Activated CD4-positive, alpha-beta memory T cell treated with anti-CD3 and anti-CD28 coated beads for 36 hours (primary cell): ENCODE measurements at regions of chr21 and their contacts with region 1.

Region 1: DNA sequence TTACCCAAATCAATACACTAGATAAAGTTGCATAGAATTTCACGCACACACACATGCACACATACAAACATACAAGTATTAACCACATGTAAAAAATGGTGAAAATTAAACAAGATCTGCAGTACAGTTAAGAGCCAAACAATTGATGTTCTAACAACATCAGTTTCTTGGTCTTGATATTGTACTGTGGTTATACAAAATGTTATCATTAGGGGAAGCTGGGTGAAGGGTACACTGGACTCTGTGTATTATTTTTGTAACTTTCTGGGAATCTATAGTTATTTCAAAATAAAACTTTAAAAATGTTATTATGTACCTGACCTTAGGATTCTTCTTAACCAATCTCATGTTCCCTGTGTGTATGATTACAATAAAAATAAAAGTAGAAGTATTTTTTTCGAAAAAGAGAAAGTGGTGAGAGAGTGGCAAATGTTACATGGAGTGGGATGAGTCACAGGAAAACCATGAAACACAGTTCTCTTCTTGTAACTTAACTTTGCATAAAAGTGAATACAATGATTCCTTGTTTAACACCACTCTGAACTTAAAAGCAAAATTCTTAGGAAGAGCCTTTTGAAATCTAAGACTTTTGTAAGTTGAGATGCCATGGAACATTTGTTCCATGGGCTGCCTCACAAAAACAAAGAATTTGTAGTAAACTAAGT is 101.6 kb upstream of the RUNX1 start:
- DNase-seq: no peak
- H3K4me3 Mint-ChIP-seq: peak overlapping the region; percentile 6
- H3K27ac Mint-ChIP-seq: peak overlapping the region; percentile 90
- H3K4me1 Mint-ChIP-seq: peaks cover 51% of the 10 kb centered on the region
- H3K27me3 Mint-ChIP-seq: peaks cover 1% of the 10 kb centered on the region

Region 2: DNA sequence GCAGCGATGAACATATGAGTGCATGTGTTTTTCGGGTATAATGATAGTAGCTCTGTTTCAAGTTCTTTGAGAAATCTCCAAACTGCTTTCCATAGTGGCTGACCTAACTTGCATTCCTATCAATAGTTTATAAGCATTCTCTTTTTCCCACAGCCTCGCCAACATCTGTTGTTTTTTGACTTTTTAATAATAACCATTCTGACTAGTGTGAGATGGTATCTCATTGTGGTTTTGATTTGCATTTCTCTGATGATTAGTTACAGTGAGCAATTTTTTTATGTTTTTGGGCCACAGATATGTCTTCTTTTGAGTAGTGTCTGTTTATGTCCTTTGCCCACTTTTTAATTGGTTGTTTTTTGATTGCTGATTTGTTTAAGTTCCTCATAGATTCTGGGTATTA is 91.0 kb before region 1 on chr21:
- CTCF ChIA-PET with region 1: no interaction called
- POLR2A ChIA-PET with region 1: no interaction called
- intact Hi-C with region 1: no loop called
- DNase-seq: no peak
- H3K4me3 Mint-ChIP-seq: no peak overlapping the region
- H3K27ac Mint-ChIP-seq: peak overlapping the region; percentile 15
- H3K4me1 Mint-ChIP-seq: peaks cover 37% of the 10 kb centered on the region
- H3K27me3 Mint-ChIP-seq: no peaks in the 10 kb centered on the region

Region 3: GRCh38 chr21:35138665-35139381 is 11.9 kb before region 1 on chr21:
- CTCF ChIA-PET with region 1: no interaction called
- POLR2A ChIA-PET with region 1: interaction called, 10 read pairs
- intact Hi-C with region 1: loop called (anchors 1 kb)
- DNase-seq: peak; percentile 79
- H3K4me3 Mint-ChIP-seq: peak overlapping the region; percentile 68
- H3K27ac Mint-ChIP-seq: peak overlapping the region; percentile 90
- H3K4me1 Mint-ChIP-seq: peaks cover 29% of the 10 kb centered on the region
- H3K27me3 Mint-ChIP-seq: no peaks in the 10 kb centered on the region

Region 4: DNA sequence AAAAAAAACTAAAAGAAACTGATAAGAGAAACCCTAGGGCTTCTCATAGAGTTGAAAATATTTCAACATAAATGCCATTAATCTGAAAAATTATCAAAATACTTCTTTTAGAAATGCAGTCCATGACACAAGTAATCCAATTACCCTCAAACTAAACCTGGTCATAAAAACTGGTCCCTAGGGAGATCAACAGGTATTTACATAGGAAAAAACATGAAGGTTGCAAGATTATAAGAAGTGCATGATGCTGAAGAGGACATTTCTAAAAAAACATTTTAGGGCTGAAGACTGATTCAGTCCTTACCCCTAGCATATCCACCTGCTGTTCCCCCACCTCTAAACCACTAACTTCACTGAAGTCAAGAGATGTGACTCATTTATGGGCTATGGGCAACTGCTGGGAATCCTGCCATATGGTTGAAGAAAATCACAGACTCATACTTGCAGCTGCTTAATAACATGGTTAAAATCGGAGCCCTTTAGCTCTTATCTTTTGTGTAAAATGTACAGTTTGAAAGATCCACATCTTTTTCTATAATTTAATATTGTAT is 29.4 kb after region 1 on chr21:
- CTCF ChIA-PET with region 1: no interaction called
- POLR2A ChIA-PET with region 1: no interaction called
- intact Hi-C with region 1: loop called (anchors 2 kb)
- DNase-seq: peak; percentile 21
- H3K4me3 Mint-ChIP-seq: no peak overlapping the region
- H3K27ac Mint-ChIP-seq: no peak overlapping the region
- H3K4me1 Mint-ChIP-seq: peaks cover 16% of the 10 kb centered on the region
- H3K27me3 Mint-ChIP-seq: peaks cover 7% of the 10 kb centered on the region

Region 5: DNA sequence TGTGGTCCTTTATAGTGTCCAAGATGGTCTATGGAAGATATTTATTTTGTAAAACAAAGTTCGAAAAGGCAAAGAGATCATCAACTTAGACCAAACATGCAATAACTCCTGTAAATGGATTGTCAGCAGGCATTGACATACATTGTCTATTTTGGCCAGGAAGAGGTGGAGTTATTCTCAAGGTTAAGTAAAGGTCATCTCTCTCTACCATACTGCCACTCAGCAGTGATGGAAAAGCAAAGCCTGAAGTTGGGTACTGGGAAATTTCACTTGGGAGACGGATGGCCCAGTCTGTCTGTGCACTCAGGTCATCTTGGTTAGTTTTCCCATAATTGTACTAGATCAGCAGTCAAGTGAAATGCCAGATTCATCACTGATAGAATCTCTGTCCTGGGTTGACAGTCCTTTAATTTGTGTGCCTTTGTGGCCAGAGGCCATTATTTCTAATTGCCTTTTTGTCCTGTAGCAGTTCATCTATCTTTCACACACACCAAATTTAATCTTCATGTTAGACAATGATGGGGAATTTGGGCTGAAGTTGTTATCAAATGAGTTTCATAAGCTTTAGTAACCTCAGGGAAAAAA is 1904.7 kb after region 1 on chr21:
- CTCF ChIA-PET with region 1: no interaction called
- POLR2A ChIA-PET with region 1: no interaction called
- intact Hi-C with region 1: no loop called
- DNase-seq: no peak
- H3K4me3 Mint-ChIP-seq: no peak overlapping the region
- H3K27ac Mint-ChIP-seq: no peak overlapping the region
- H3K4me1 Mint-ChIP-seq: no peaks in the 10 kb centered on the region
- H3K27me3 Mint-ChIP-seq: no peaks in the 10 kb centered on the region